ENCODE measurements at regions of chr1 and their contacts with region 1.

Region 1: DNA sequence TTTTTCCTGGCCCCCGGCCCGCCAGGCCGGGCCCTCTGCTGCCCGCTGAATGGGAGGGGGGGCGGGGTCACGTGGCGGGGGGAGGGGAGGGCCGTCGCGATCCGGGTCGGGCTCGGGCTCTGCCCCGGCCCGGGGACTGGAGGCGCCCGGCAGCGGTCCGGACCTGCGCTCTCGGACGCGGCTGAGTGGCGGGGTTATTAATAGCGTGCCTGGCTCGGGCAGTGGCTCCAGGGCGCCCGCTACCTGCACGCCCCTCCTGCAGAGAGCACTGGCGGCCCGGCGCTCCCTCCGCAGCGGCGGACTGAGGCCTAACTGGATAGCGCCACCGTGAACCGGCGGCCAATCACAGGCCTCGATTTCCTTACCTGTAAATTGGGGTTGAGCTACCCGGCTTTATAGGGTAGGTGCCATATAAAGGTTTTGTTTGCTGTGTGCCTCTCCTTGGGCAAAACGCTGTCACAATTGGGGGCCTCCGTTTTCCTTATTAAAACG is 28.1 kb downstream of the AHDC1 start:
- DNase-seq: no peak
- ATAC-seq: peak; percentile 45
- H3K4me3 ChIP-seq: no peak overlapping the region
- H3K4me3 Mint-ChIP-seq: peak overlapping the region in 8 of 10 donors; percentile 24 to 68 (median 57)
- H3K27ac ChIP-seq: no peak overlapping the region
- H3K27ac Mint-ChIP-seq: peak overlapping the region in 1 of 9 donors; percentile 55
- H3K4me1 ChIP-seq: peaks cover 0 to 5% of the 10 kb centered on the region in 2 donors
- H3K4me1 Mint-ChIP-seq: peaks cover 12 to 63% (median 46%) of the 10 kb centered on the region in 7 donors
- H3K27me3 ChIP-seq: no peaks in the 10 kb centered on the region
- H3K27me3 Mint-ChIP-seq: peaks cover 0 to 23% (median 0%) of the 10 kb centered on the region in 5 donors

Region 2: GRCh38 chr1:26993237-26994019 is 582.5 kb before region 1 on chr1 and contains the start of gene TRNP1:
- CTCF ChIA-PET with region 1: no interaction called
- POLR2A ChIA-PET with region 1: no interaction called
- intact Hi-C with region 1: no loop called
- DNase-seq: peak; percentile 24 to 79 (median 50)
- ATAC-seq: peak; percentile 75
- H3K4me3 ChIP-seq: peak within 1 kb of the TSS; percentile 53
- H3K4me3 Mint-ChIP-seq: peak within 1 kb of the TSS; percentile 74 to 91 (median 78)
- H3K27ac ChIP-seq: no peak within 1 kb of the TSS
- H3K27ac Mint-ChIP-seq: peak within 1 kb of the TSS in 3 of 9 donors; percentile 48 to 68 (median 50)
- H3K4me1 ChIP-seq: peaks cover 5 to 21% of the 10 kb centered on the region in 2 donors
- H3K4me1 Mint-ChIP-seq: peaks cover 5 to 27% (median 22%) of the 10 kb centered on the region in 7 donors
- H3K27me3 ChIP-seq: peaks cover 0 to 18% of the 10 kb centered on the region in 2 donors
- H3K27me3 Mint-ChIP-seq: peaks cover 37 to 71% (median 42%) of the 10 kb centered on the region in 5 donors
- total RNA-seq, gene TRNP1: 0.19 to 5.0 TPM in 2 of 5 experiments, not detected in the others

Region 3: DNA sequence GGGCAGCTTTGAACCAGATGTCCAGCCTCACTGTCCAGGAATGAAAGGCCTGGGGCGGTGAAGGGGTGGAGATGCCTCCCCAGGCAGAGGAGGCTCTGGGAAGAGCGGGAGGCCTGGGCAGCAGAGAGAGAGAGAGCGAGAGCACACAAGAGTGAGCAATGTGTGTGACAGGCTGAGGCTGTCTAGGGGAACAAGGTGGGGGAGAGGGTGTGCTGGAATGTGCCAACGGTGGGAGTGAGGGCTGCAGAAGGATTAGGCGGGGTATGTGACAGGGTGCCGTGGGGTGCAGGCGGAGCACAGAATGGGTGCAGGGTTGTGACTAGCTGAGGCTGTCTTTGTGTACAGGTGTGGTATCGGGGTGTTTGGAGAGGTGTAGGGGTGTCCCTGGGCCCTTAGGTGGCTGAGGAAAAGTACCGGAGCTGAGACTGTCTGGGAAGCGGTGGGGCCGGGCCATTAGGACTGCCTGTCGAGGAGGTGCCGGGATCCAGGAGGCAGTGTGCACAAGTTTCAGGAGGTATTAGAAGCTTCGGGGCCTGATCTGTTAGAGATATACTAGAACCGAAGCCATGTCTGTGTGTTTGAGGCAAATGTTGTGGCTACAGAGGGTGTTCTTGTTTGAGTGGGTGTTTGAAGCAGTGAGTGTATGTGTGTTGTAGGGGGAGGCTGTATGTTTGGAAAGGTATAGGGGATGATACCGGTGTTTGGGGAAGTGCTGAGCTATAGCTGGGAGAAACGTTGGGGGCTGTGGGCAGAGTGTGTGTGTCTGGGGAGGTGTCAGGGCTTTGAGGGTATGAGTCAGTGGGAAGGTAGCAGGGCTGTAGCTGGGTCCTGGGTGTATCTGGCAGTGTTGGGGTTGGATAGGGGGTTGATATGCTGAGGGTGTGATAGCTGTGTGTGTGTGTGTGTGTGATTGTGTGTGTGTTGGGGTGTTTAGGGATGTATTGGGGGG is 18.9 kb after region 1 on chr1:
- CTCF ChIA-PET with region 1: no interaction called
- POLR2A ChIA-PET with region 1: interaction called, 4 read pairs
- intact Hi-C with region 1: loop called in 1 of 2 experiments (anchors 2 kb)
- DNase-seq: no peak
- ATAC-seq: peak; percentile 36
- H3K4me3 ChIP-seq: no peak overlapping the region
- H3K4me3 Mint-ChIP-seq: no peak overlapping the region
- H3K27ac ChIP-seq: no peak overlapping the region
- H3K27ac Mint-ChIP-seq: no peak overlapping the region
- H3K4me1 ChIP-seq: peaks cover 14 to 40% of the 10 kb centered on the region in 2 donors
- H3K4me1 Mint-ChIP-seq: peaks cover 6 to 31% (median 10%) of the 10 kb centered on the region in 7 donors
- H3K27me3 ChIP-seq: no peaks in the 10 kb centered on the region
- H3K27me3 Mint-ChIP-seq: no peaks in the 10 kb centered on the region

Region 4: DNA sequence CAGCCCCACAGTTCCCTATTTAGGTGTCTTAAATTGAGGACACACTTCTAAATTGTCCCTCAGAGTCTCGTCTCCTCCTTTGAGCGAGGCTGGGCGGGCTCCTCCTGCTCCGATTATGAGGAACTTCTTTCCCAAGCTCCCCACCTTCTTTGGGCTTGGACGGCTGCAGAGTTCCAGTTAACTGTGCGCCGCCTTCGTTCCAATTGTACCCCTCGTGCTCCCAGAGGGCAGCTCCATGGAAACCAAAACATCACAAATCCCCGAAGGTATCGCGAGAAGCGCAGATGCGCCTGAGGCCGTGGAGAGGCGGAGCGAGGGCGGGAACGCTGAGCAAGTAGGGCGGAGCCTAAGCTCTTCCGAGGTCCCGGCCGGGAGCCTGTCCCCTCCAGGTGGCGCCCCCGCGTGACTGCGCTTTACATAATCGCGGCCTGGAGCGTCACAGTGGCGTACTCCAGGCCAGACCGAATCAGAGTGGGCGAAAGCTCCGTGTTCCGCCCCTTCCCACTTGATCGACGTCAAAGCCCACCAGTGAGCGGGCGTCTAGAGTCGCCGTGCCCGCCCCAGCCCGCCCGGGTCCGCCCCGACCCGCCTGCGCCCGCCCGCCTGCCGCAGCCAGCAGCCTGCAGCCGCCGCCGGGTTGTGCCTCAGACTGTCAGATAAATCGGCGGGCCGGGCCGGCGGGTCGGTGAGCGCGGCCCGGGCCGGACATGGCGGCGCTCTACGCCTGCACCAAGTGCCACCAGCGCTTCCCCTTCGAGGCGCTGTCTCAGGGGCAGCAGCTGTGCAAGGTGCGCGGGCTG is 149.7 kb after region 1 on chr1 and contains the start of gene FAM76A:
- CTCF ChIA-PET with region 1: no interaction called
- POLR2A ChIA-PET with region 1: no interaction called
- intact Hi-C with region 1: no loop called
- DNase-seq: peak; percentile 97 to 100 (median 99)
- ATAC-seq: peak; percentile 97
- H3K4me3 ChIP-seq: peak within 1 kb of the TSS; percentile 77
- H3K4me3 Mint-ChIP-seq: peak within 1 kb of the TSS; percentile 86 to 93 (median 90)
- H3K27ac ChIP-seq: peak within 1 kb of the TSS; percentile 91
- H3K27ac Mint-ChIP-seq: peak within 1 kb of the TSS; percentile 93 to 100 (median 98)
- H3K4me1 ChIP-seq: peaks cover 7 to 17% of the 10 kb centered on the region in 2 donors
- H3K4me1 Mint-ChIP-seq: peaks cover 9 to 35% (median 28%) of the 10 kb centered on the region in 7 donors
- H3K27me3 ChIP-seq: no peaks in the 10 kb centered on the region
- H3K27me3 Mint-ChIP-seq: no peaks in the 10 kb centered on the region
- total RNA-seq, gene FAM76A: 15.2 to 25.2 (median 22.2) TPM

Measured in naive thymus-derived CD4-positive, alpha-beta T cell (primary cell).